ENCODE measurements at regions of chr3 and their contacts with region 1.

Region 1: DNA sequence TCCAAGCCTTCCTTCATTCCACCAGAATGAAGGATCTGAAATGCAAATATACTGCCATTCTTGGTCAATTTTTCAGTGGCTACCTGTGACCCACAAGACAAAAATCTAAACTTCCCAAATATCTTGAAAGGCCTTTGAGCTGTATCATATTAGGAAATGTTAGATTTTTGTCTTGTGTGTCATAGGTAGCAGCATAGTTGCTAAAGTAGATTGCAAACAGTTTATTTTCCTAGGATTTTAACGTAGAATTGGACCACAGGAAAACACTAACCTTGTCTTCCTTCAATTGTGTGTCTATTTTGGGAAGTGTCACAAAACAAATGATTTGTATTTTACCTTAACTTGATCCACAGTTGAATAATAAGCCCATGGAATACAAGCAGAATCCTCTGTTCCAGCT is 42.4 kb downstream of the CP start:
- DNase-seq: peak; percentile 37
- H3K4me3 ChIP-seq: no peak overlapping the region
- H3K27me3 ChIP-seq: no peaks in the 10 kb centered on the region
- CTCF ChIP-seq: no peak

Region 2: GRCh38 chr3:149216193-149216869 is 37.1 kb after region 1 on chr3:
- CTCF ChIA-PET with region 1: no interaction called
- POLR2A ChIA-PET with region 1: interaction called, 11 read pairs
- DNase-seq: no peak
- H3K4me3 ChIP-seq: no peak overlapping the region
- H3K27me3 ChIP-seq: no peaks in the 10 kb centered on the region
- CTCF ChIP-seq: no peak

Region 3: GRCh38 chr3:150710097-150710496 is 1530.9 kb after region 1 on chr3:
- CTCF ChIA-PET with region 1: no interaction called
- POLR2A ChIA-PET with region 1: no interaction called
- DNase-seq: no peak
- H3K4me3 ChIP-seq: no peak overlapping the region
- H3K27me3 ChIP-seq: no peaks in the 10 kb centered on the region
- CTCF ChIP-seq: no peak